ENCODE measurements at regions of chr22 and their contacts with region 1.

Region 1: GRCh38 chr22:49930739-49931412 is 12.4 kb downstream of the CRELD2 start:
- DNase-seq: peak; percentile 74
- H3K4me3 ChIP-seq: no peak overlapping the region
- H3K27ac ChIP-seq: no peak overlapping the region
- H3K4me1 ChIP-seq: peaks cover 0 to 30% of the 10 kb centered on the region in 2 experiments; a peak in 1 of 4 replicates
- H3K27me3 ChIP-seq: no peaks in the 10 kb centered on the region
- CTCF ChIP-seq: peak; percentile 45
- EP300 ChIP-seq: no peak
- RAD21 ChIP-seq: peak; percentile 77

Region 2: GRCh38 chr22:49861642-49862495 is 69.0 kb before region 1 on chr22:
- CTCF ChIA-PET with region 1: no interaction called
- POLR2A ChIA-PET with region 1: no interaction called
- DNase-seq: peak; percentile 54
- H3K4me3 ChIP-seq: no peak overlapping the region
- H3K27ac ChIP-seq: no peak overlapping the region
- H3K4me1 ChIP-seq: peaks cover 0 to 4% of the 10 kb centered on the region in 2 experiments; a peak in 1 of 4 replicates
- H3K27me3 ChIP-seq: no peaks in the 10 kb centered on the region
- CTCF ChIP-seq: peak; percentile 16; the same call in 1 of the 2 replicates
- EP300 ChIP-seq: no peak
- RAD21 ChIP-seq: no peak

Region 3: DNA sequence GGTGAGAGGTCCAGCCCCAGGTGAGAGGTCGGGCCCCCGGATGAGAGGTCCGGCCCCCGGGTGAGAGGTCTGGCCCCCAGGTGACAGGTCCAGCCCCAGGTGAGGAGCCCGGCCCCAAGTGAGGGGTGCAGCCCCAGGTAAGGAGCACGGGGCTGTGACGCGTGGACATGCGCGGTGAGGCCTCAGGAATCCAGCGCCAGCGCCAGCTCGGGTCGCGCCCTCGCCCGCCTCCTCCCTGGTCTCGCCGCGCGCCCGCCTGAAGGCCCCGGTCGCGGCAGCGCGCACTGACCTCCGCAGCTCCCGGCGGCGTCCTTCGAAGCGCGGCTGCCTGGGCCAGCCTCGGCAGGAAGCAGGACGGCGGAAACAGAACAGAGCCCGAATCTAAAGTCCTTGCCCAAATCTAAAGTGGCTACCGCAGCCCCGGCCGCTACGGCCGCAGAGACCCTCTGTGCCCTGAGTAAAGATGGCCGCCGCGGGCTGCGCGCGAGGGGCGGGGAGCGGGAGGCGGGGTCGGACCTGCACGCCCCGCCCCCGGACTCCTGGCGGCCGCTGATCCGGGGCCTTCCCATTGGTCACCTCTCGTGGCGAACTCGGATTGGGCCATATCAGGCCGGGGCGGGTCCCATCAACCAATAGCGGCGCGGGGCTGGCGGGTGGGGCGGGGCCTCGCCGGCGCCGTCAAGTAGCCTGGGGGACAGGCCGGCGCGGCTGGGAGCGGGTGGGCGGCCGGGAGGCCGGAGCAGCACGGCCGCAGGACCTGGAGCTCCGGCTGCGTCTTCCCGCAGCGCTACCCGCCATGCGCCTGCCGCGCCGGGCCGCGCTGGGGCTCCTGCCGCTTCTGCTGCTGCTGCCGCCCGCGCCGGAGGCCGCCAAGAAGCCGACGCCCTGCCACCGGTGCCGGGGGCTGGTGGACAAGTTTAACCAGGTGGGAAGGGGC is 12.6 kb before region 1 on chr22 and contains the starts of genes ALG12 and CRELD2:
- CTCF ChIA-PET with region 1: interaction called, 18 read pairs
- POLR2A ChIA-PET with region 1: interaction called, 5 read pairs
- DNase-seq: peak; percentile 100
- H3K4me3 ChIP-seq: peak within 1 kb of the TSS; percentile 72 to 83
- H3K27ac ChIP-seq: peak within 1 kb of the TSS; percentile 88 to 93
- H3K4me1 ChIP-seq: peaks cover 0 to 12% of the 10 kb centered on the region in 2 experiments; a peak in 2 of 4 replicates
- H3K27me3 ChIP-seq: no peaks in the 10 kb centered on the region
- CTCF ChIP-seq: no peak
- EP300 ChIP-seq: no peak
- RAD21 ChIP-seq: no peak
- polyA plus RNA-seq, gene ALG12: 7.5 and 9.9 TPM in 2 replicates
- polyA plus RNA-seq, gene CRELD2: 92.5 and 113 TPM in 2 replicates

Region 4: DNA sequence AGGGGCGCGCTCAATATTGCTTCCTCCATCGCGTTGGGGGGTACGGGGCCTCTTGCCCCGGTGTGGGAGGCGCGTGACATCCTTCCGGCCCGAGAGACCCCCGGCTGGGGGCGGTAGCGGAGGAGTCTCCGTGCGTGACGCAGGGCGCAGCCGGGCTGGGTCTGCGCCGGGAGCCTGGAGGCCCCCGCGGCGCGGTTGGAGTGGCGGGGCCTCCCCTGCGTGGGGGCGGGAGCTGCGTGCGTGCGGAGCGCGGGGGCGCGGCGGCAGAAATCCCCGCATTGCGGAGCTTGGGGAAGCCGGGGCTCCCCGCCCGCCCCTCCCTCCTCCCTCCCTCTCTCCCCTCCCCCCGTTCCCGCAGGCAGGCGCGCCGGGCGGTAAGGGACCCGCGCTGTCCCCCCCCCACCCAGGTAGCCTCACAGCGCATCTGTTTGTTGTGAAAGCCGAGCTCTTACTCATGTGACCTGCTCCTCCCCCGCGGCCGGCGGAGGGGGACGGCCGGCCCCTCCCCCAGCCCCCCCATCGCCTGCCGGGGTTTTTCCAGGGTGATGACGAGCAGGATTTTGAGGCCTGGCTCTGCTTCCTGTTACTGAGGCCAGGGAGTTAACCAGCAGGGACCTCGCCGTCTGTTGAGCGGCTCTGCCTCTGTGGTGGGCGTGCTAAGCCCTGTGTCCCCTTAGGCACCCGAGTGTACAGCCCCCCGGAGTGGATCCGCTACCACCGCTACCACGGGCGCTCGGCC is 31.3 kb after region 1 on chr22:
- CTCF ChIA-PET with region 1: interaction called, 18 read pairs
- POLR2A ChIA-PET with region 1: interaction called, 3 read pairs
- DNase-seq: peak; percentile 89
- H3K4me3 ChIP-seq: peak overlapping the region; percentile 67 to 76
- H3K27ac ChIP-seq: peak overlapping the region; percentile 55 to 74; a peak in 3 of 4 replicates
- H3K4me1 ChIP-seq: peaks cover 20 to 29% of the 10 kb centered on the region in 2 experiments; a peak in 2 of 4 replicates
- H3K27me3 ChIP-seq: no peaks in the 10 kb centered on the region
- CTCF ChIP-seq: no peak
- EP300 ChIP-seq: peak in 1 of 2 experiments; percentile 11; a peak in 1 of 4 replicates
- RAD21 ChIP-seq: no peak